Activated T-helper 2 cell treated with anti-CD3 and anti-CD28 coated beads, Interferon-gamma antibody, Interleukin-2, Interleukin-4, amounts not matched to agents 10 μg/mL and 5 μg/mL and 100 μg/mL, durations not matched to agents 14 hours and 24 hours and 36 hours (primary cell): ENCODE measurements at regions of chr7 and their contacts with region 1.

Region 1: DNA sequence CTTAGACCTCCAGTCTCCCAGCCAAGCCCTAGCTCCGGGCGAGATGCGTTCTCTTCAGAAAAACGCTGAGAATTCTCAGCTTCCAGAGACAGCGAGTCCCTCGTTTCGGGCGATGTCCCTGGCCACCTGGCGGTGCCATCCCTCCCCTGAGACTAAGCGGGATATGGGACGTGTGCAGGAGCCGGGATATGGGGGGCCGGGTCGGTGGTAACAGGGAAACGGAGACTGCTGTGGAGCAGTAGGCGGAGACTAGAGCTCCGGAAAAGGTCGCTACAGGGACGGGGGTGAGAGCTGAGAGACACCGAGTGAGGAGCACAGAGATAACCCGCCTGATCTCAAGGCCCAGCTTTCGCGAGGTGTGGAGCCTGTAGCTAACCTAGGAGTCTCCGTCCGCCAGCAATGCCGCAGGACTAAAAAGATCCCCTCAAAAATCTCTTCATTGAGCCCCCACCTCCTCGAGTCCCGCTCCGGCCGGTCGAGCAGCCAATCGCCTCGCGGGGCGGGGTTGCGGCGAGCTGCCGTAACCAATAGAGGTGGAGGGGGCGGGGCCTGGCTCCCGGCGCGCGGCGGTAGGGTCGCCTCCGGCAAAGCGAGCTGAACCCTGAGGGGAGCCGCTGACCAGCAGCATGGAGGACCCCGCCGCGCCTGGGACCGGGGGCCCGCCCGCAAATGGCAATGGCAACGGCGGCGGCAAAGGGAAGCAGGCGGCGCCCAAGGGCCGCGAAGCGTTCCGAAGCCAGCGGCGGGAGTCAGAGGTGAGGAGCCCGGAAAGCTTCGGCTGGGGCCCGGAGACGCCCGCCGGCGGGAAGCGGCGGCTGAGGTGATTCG is at the start of gene STRIP2:
- DNase-seq: peak; percentile 91
- H3K4me3 Mint-ChIP-seq: peak within 1 kb of the TSS; percentile 99
- H3K27ac Mint-ChIP-seq: peak within 1 kb of the TSS; percentile 94
- H3K4me1 Mint-ChIP-seq: peaks cover 42% of the 10 kb centered on the region
- H3K27me3 Mint-ChIP-seq: peaks cover 13% of the 10 kb centered on the region
- total RNA-seq, gene STRIP2: 73.4 and 73.5 TPM in 2 replicates

Region 2: DNA sequence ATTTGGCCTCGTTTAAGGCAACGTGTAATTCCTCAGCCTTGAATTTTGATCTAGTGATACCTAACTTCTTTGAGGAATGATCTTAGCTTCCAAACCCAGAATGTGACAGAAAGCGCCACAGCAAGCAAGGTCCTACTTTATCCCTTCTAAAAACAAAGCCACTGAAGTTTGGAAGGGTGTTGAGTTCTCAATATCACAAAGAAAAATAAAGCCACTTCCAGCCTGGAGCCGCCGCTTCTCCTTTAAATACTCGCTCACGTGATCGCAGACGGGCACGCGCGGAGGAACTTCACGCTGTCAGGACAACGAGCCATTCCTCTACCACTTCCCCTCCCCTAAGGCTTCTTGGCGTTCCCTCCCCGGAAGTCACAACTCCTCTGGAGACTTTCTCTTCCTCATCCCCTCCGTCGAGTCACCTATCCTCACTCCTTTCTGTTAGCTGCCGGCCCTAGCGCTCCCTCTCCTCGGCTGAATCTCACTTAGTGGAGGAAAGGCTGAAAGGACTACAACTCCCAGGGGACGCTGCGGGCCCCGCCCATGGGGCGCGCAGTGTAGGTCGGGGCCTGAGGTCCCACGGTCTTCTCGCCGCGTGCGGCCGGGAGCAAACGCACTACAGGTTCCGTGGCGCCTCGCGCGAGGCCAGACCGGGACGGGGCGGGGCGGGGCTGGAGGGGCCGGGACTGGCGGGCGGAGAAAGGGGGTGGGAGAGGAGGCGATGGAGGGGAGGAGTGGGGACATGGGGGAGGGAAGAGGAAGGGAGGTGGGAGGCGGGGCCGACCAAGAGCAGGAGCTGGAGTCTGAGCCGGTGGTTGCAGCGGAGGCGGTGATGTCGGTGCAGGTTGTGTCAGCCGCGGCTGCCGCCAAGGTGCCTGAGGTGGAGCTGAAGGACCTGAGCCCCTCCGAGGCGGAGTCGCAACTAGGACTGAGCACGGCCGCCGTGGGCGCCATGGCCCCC is 209.5 kb before region 1 on chr7 and contains the start of gene AHCYL2:
- intact Hi-C with region 1: loop called (anchors 10 kb)
- DNase-seq: peak; percentile 94
- H3K4me3 Mint-ChIP-seq: peak within 1 kb of the TSS; percentile 94
- H3K27ac Mint-ChIP-seq: peak within 1 kb of the TSS; percentile 96
- H3K4me1 Mint-ChIP-seq: peaks cover 22% of the 10 kb centered on the region
- H3K27me3 Mint-ChIP-seq: no peaks in the 10 kb centered on the region
- total RNA-seq, gene AHCYL2: 14.7 and 15.1 TPM in 2 replicates

Region 3: GRCh38 chr7:129343099-129343700 is 90.9 kb before region 1 on chr7:
- intact Hi-C with region 1: loop called (anchors 2 kb)
- DNase-seq: no peak
- H3K4me3 Mint-ChIP-seq: no peak overlapping the region
- H3K27ac Mint-ChIP-seq: peak overlapping the region; percentile 59
- H3K4me1 Mint-ChIP-seq: peaks cover 38% of the 10 kb centered on the region
- H3K27me3 Mint-ChIP-seq: peaks cover 2% of the 10 kb centered on the region

Region 4: DNA sequence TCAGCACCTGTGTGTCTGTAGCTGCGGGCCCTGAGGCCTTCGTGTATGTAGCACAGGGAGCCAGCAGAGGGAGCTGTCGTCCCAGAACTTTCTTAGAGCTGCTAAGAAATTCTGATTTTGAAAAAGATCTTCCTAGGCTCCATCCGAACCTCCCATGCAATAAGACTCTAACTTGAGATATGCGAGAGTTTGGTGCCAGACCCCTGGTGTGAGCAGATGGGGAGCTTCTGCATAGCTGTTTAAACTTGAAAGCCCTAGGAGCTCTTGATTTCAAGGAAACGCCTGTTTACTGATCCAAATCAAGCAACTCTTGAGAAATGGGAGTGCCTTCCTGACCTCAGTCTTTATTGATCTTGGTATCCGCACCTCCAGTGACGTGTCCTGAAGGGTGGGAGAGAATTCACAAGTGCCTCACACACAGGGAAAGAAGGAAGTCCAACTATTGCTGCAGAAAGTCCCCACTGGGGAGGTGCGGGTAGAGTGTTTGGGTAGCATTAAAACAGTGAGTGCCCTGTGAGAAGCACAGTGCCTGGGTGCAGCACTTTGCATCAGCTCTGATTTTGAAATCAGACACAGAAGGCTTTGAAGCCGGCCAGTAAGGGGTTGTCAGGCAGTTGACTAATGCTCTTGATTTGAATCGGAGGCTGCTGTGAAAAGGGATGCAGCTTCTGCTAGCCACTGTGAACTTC is 66.2 kb before region 1 on chr7:
- intact Hi-C with region 1: loop called (anchors 1 kb)
- DNase-seq: peak; percentile 63
- H3K4me3 Mint-ChIP-seq: peak overlapping the region; percentile 68
- H3K27ac Mint-ChIP-seq: peak overlapping the region; percentile 86
- H3K4me1 Mint-ChIP-seq: peaks cover 31% of the 10 kb centered on the region
- H3K27me3 Mint-ChIP-seq: no peaks in the 10 kb centered on the region

Region 5: GRCh38 chr7:129401967-129402860 is 31.8 kb before region 1 on chr7:
- intact Hi-C with region 1: loop called (anchors 1 kb)
- DNase-seq: no peak
- H3K4me3 Mint-ChIP-seq: no peak overlapping the region
- H3K27ac Mint-ChIP-seq: peak overlapping the region; percentile 13
- H3K4me1 Mint-ChIP-seq: peaks cover 26% of the 10 kb centered on the region
- H3K27me3 Mint-ChIP-seq: no peaks in the 10 kb centered on the region

Region 6: DNA sequence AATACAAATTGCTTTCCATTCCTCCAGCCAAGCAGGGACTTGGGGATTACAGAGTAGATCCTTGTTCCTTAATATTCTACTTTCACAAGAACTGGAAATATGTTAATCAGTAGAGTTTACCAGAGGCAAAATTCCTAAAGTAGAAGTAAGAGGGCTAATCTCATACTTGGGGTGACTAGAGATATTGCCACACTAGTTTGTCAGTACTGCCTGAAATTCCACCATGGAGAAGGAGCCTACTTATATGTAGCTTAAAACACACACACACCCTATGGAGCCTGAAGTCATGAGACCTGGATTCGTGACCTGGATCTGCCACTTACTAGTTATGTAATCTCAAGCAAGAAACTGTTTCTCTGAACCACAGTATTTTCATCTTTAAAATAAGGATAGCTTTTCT is 34.0 kb after region 1 on chr7:
- intact Hi-C with region 1: loop called (anchors 2 kb)
- DNase-seq: no peak
- H3K4me3 Mint-ChIP-seq: no peak overlapping the region
- H3K27ac Mint-ChIP-seq: no peak overlapping the region
- H3K4me1 Mint-ChIP-seq: peaks cover 9% of the 10 kb centered on the region
- H3K27me3 Mint-ChIP-seq: no peaks in the 10 kb centered on the region

Region 7: GRCh38 chr7:129494041-129494440 is 60.0 kb after region 1 on chr7:
- intact Hi-C with region 1: loop called (anchors 2 kb)
- DNase-seq: peak; percentile 16
- H3K4me3 Mint-ChIP-seq: no peak overlapping the region
- H3K27ac Mint-ChIP-seq: peak overlapping the region; percentile 72
- H3K4me1 Mint-ChIP-seq: peaks cover 44% of the 10 kb centered on the region
- H3K27me3 Mint-ChIP-seq: no peaks in the 10 kb centered on the region